Heart left ventricle (tissue), 16 donors: ENCODE measurements at regions of chr1 and their contacts with region 1.

Region 1: GRCh38 chr1:149887456-149888247 is 11.7 kb upstream of the BOLA1 start:
- DNase-seq: peak; percentile 77 to 91 (median 84)
- ATAC-seq: peak; percentile 73 to 76 (median 73)
- H3K4me3 ChIP-seq: peak overlapping the region; percentile 42 to 86 (median 67)
- H3K27ac ChIP-seq: peak overlapping the region; percentile 87 to 100 (median 96)
- H3K4me1 ChIP-seq: peaks cover 0 to 29% (median 18%) of the 10 kb centered on the region in 12 donors
- H3K27me3 ChIP-seq: no peaks in the 10 kb centered on the region
- CTCF ChIP-seq: no peak
- POLR2A ChIP-seq: peak; percentile 36 to 93

Region 2: GRCh38 chr1:149927503-149928387 is 40.1 kb after region 1 on chr1 and contains the start of gene SF3B4:
- intact Hi-C with region 1: loop called in 5 of 10 experiments (anchors 2 kb)
- DNase-seq: peak; percentile 96 to 98 (median 97)
- ATAC-seq: peak; percentile 98 to 99 (median 98)
- H3K4me3 ChIP-seq: peak within 1 kb of the TSS; percentile 69 to 98 (median 92)
- H3K27ac ChIP-seq: peak within 1 kb of the TSS; percentile 91 to 99 (median 96)
- H3K4me1 ChIP-seq: peaks cover 5 to 43% (median 29%) of the 10 kb centered on the region in 12 donors
- H3K27me3 ChIP-seq: no peaks in the 10 kb centered on the region
- CTCF ChIP-seq: peak in 2 of 12 donors; percentile 9 to 11
- POLR2A ChIP-seq: peak in 1 of 2 donors; percentile 96
- total RNA-seq, gene SF3B4: 10.2 to 32.7 (median 23.7) TPM

Region 3: DNA sequence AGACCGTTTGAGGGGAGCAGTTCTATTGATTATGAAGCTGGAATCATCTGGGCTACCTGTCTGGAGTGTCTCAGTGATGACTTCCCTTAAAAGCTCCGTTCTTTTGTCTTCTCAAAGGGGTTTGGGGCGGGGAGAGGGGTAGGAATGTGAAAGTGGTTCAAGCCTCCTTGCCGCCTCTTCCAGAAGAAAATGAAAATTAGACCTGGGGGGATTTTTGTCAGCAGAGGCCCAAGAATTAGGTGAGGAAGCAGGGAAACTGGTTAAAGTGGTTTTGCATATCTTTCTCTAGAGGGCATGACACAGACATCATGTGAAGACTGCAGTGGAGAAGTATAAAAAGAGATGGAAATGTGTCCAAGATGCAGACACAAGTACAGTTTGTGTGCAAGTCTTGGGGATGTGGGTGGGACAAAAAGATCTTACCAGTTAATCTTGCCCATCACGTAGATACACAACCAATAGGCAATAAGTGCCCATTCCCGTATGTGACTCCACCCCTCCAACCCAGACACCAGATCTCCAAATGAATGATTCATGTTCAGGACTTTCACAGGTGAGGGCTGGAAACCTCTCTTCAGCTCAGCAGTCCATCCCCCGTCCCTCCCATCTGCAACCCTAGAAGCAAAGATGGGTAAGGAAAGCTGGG is 49.5 kb after region 1 on chr1:
- intact Hi-C with region 1: loop called in 1 of 10 experiments (anchors 1 kb)
- DNase-seq: no peak
- ATAC-seq: no peak
- H3K4me3 ChIP-seq: peak overlapping the region; percentile 22 to 73 (median 55)
- H3K27ac ChIP-seq: peak overlapping the region in 9 of 12 donors; percentile 10 to 88 (median 59)
- H3K4me1 ChIP-seq: peaks cover 0 to 45% (median 35%) of the 10 kb centered on the region in 12 donors
- H3K27me3 ChIP-seq: no peaks in the 10 kb centered on the region
- CTCF ChIP-seq: no peak
- POLR2A ChIP-seq: no peak